K562 (cell line): ENCODE measurements at regions of chr3 and their contacts with region 1.

Region 1: DNA sequence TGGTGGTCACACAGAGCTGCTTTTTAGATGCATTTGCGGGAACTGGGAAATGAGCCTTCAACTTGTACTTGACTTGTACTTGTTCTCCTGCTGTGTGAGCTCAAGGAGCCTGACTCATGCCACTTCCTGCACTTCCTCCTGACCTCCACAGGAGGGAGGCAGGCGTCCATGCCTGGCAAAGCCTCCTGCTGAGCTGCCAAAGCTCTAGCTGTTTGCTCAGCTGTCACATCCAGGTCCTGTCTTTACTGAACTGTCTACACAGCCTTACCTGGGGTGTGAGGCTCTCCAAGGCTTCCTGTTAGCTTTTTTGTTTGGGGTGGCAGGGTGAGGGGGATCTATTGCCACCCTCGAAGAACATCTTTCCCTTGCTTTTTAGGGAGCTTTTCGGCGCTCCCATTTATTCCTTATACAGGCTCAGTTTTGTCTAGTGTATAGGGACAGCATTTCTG is 6.4 kb downstream of the THPO start:
- DNase-seq: peak; percentile 73 to 89 (median 78)
- ATAC-seq: peak; percentile 96
- H3K4me3 ChIP-seq: no peak overlapping the region
- H3K27ac ChIP-seq: no peak overlapping the region
- H3K4me1 ChIP-seq: no peaks in the 10 kb centered on the region
- H3K27me3 ChIP-seq: peaks cover 2 to 4% of the 10 kb centered on the region in 2 experiments; a peak in 3 of 5 replicates
- CTCF ChIP-seq: peak; percentile 95 to 98 (median 97)
- EP300 ChIP-seq: no peak
- POLR2A ChIP-seq: no peak
- RAD21 ChIP-seq: peak; percentile 85 to 97

Region 2: GRCh38 chr3:184261270-184261853 is 110.2 kb before region 1 on chr3 and contains the start of gene CAMK2N2:
- CTCF ChIA-PET with region 1: no interaction called
- POLR2A ChIA-PET with region 1: no interaction called
- in situ Hi-C with region 1: no loop called
- intact Hi-C with region 1: no loop called
- DNase-seq: peak; percentile 76 to 93 (median 88)
- ATAC-seq: peak; percentile 76
- H3K4me3 ChIP-seq: peak within 1 kb of the TSS; percentile 42
- H3K27ac ChIP-seq: no peak within 1 kb of the TSS
- H3K4me1 ChIP-seq: peaks cover 14 to 36% of the 10 kb centered on the region in 2 experiments; a peak in 4 of 5 replicates
- H3K27me3 ChIP-seq: peaks cover 10 to 31% of the 10 kb centered on the region in 2 experiments; a peak in 4 of 5 replicates
- CTCF ChIP-seq: no peak
- EP300 ChIP-seq: no peak
- POLR2A ChIP-seq: no peak
- RAD21 ChIP-seq: no peak
- polyA plus RNA-seq, gene CAMK2N2: not detected

Region 3: DNA sequence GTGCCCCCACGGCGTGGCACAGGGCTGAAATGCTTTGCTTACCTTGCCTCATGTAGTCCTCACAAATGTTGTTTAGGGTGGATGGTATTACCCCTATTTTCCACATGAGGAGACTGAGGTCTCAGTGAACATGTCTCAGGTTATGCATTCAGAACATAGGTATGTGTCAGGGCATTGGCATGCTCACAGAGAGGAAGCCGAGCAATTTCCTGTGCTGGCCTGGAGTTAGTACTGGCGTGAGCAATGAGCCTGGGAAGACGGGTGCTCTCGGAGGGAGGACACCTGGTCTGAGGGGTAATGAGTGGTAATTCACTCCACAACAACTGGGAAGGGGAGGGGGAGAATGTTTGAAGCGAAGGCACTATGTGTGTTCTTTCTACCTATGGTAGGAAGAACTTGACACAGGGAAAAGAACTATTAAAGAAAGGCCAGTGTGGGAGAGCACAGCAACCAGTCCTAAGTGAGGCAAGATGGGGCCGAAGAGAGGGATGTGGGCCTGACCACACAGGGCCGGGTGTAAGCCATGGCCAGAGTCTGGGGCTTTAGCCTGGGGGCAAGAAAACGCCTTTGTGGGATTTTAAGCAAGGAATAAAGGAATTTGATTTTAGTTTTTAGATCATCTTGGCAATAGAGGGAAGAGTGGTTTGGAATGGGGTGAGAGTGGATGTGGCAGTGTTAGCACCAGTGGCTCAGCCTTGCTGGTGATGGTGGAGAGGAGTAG is 39.1 kb before region 1 on chr3:
- CTCF ChIA-PET with region 1: no interaction called
- POLR2A ChIA-PET with region 1: no interaction called
- in situ Hi-C with region 1: no loop called
- intact Hi-C with region 1: no loop called
- DNase-seq: no peak
- ATAC-seq: no peak
- H3K4me3 ChIP-seq: no peak overlapping the region
- H3K27ac ChIP-seq: peak overlapping the region; percentile 83; the same call in 2 of the 3 replicates
- H3K4me1 ChIP-seq: peaks cover 50% of the 10 kb centered on the region in 2 experiments
- H3K27me3 ChIP-seq: no peaks in the 10 kb centered on the region
- CTCF ChIP-seq: no peak
- EP300 ChIP-seq: no peak
- POLR2A ChIP-seq: peak; percentile 47; the same call in 1 of the 2 replicates
- RAD21 ChIP-seq: no peak

Region 4: GRCh38 chr3:184417619-184418327 is 46.2 kb after region 1 on chr3:
- CTCF ChIA-PET with region 1: no interaction called
- POLR2A ChIA-PET with region 1: interaction called, 5 read pairs
- in situ Hi-C with region 1: loop called (anchors 5 kb)
- intact Hi-C with region 1: loop called (anchors 2 kb)
- DNase-seq: peak; percentile 70 to 83 (median 78)
- ATAC-seq: peak; percentile 98
- H3K4me3 ChIP-seq: no peak overlapping the region
- H3K27ac ChIP-seq: no peak overlapping the region
- H3K4me1 ChIP-seq: no peaks in the 10 kb centered on the region
- H3K27me3 ChIP-seq: peaks cover 0 to 34% of the 10 kb centered on the region in 2 experiments; a peak in 3 of 5 replicates
- CTCF ChIP-seq: peak; percentile 88 to 92 (median 89)
- EP300 ChIP-seq: no peak
- POLR2A ChIP-seq: no peak
- RAD21 ChIP-seq: peak; percentile 62 to 89

Region 5: GRCh38 chr3:184469423-184469822 is 97.8 kb after region 1 on chr3:
- CTCF ChIA-PET with region 1: interaction called, 7 read pairs
- POLR2A ChIA-PET with region 1: interaction called, 4 read pairs
- in situ Hi-C with region 1: loop called (anchors 5 kb)
- intact Hi-C with region 1: loop called (anchors 1 kb)
- DNase-seq: peak; percentile 48 to 59 (median 52)
- ATAC-seq: peak; percentile 84
- H3K4me3 ChIP-seq: no peak overlapping the region
- H3K27ac ChIP-seq: no peak overlapping the region
- H3K4me1 ChIP-seq: no peaks in the 10 kb centered on the region; a peak in 1 of 5 replicates
- H3K27me3 ChIP-seq: peaks cover 11 to 47% of the 10 kb centered on the region in 2 experiments; a peak in 4 of 5 replicates
- CTCF ChIP-seq: peak; percentile 76 to 80 (median 77)
- EP300 ChIP-seq: no peak
- POLR2A ChIP-seq: no peak
- RAD21 ChIP-seq: peak; percentile 42 to 78

Region 6: DNA sequence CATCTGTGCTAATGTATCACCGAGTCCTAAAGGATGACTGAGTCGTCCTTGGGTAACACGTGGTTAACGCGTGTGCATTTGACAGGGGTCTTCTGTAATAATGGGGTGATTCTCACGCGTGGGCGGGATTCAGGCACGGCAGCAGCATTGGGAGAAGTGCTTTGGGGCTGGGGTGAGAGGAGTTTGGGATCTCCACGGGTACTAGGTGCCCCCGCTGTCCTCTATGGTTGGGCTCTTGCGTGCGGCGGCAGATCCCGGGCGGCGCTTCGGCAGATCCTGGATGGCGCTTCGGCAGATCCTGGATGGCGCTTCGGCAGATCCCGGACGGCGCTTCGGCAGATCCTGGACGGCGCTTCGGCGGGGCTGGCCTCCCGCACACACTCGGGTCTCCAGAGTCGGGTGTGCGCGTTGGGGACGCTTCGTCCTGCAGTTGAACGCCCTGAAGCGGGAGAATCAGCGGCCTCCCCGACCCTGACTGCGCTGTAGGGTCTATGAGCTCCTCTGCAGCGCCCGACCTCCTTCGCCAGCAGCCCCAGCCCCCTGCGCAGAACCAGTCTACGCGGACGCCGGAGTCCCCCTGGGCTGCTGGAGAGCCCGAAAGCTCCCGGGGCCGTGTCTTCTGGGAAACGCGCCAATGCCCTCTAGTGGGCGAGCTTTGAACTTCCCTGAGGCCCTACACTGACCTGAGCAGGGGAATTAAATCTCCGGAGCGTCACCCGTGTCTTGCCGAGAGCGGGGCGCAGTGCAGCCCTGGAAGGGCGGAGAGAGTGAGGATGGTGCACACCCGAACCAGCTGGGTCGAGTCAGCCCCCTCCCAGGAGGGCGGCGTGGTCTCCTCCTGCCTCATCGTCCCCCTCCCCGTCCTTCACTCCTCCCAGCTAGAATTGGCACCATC is 141.9 kb after region 1 on chr3:
- CTCF ChIA-PET with region 1: interaction called, 3 read pairs
- POLR2A ChIA-PET with region 1: interaction called, 4 read pairs
- in situ Hi-C with region 1: no loop called
- intact Hi-C with region 1: loop called (anchors 1 kb)
- DNase-seq: peak; percentile 78 to 87 (median 84)
- ATAC-seq: peak; percentile 100
- H3K4me3 ChIP-seq: no peak overlapping the region
- H3K27ac ChIP-seq: no peak overlapping the region
- H3K4me1 ChIP-seq: peaks cover 0 to 10% of the 10 kb centered on the region in 2 experiments; a peak in 2 of 5 replicates
- H3K27me3 ChIP-seq: peaks cover 10 to 35% of the 10 kb centered on the region in 2 experiments; a peak in 3 of 5 replicates
- CTCF ChIP-seq: peak; percentile 79 to 83 (median 82)
- EP300 ChIP-seq: no peak
- POLR2A ChIP-seq: no peak
- RAD21 ChIP-seq: peak; percentile 47 to 76

Region 7: DNA sequence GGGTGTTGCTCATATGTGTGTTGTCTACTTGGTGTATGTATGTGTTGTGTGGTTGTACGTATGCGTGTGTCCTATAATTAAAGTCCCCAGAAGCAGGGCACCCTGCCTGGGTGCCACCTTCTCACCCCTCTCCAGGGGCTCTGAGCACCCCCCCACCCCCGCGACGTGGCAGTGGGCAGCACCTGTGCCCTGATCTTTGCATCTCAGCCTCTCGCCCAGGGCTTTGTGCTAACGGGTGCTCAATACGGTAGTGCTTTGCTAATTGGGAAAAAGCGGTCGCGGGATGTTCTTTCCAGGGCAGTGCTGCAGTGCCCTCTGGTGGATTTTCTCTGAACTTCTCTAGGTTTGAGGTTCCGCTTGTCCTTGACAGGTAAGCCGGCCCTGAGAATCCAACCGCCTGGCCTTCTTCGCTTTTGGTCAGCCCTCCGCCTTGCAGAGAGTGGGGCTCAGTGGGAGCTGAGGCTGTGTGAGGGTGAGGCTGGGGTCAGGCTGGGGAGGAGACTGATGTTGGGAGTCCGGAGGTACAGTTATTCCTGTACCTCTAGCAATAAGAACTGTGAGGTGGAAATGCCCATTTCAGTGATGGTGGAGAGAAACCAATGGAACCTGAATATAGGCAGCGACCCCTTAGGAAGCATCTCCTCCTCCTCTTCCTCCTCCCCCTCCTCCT is 172.4 kb after region 1 on chr3:
- CTCF ChIA-PET with region 1: interaction called, 26 read pairs
- POLR2A ChIA-PET with region 1: interaction called, 4 read pairs
- in situ Hi-C with region 1: no loop called
- intact Hi-C with region 1: loop called (anchors 1 kb)
- DNase-seq: peak; percentile 66 to 82 (median 73)
- ATAC-seq: peak; percentile 84
- H3K4me3 ChIP-seq: no peak overlapping the region
- H3K27ac ChIP-seq: no peak overlapping the region
- H3K4me1 ChIP-seq: peaks cover 0 to 4% of the 10 kb centered on the region in 2 experiments; a peak in 1 of 5 replicates
- H3K27me3 ChIP-seq: peaks cover 16 to 50% of the 10 kb centered on the region in 2 experiments; a peak in 3 of 5 replicates
- CTCF ChIP-seq: peak; percentile 83 to 91 (median 85)
- EP300 ChIP-seq: no peak
- POLR2A ChIP-seq: no peak
- RAD21 ChIP-seq: peak; percentile 74 to 82

Region 8: DNA sequence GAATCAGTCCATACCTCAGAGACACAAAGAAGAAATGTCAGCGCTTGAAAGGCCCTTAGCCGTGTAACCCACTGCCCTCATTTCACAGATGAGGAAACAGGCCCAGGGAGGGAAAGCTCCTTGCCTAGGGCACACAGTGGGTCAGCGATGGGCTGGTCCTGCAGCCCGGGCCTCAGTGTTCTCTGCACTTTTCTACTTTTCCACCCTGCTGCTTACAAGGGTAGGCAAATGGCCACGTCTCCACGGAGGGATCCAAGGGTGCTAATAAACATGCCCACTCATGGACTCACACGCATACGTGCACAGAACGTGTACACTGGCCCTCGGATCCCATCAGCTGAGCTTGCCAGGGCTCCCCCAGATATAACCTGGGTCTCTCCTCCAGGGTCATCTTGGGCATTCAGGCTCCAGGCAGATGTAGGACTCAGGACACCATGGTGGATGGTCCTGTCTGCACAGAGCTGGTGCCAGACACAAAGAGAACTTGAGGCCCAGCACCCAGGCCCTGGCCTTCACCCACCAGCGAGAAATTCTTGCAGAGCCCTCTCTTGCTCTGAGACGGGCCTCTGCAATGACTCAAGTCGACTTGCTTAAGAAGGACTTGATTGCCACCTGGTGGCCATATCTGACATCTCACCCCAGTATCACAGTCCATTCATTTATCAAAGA is 405.9 kb after region 1 on chr3:
- CTCF ChIA-PET with region 1: no interaction called
- POLR2A ChIA-PET with region 1: no interaction called
- in situ Hi-C with region 1: no loop called
- intact Hi-C with region 1: loop called (anchors 10 kb)
- DNase-seq: peak; percentile 81 to 90 (median 82)
- ATAC-seq: peak; percentile 97
- H3K4me3 ChIP-seq: no peak overlapping the region
- H3K27ac ChIP-seq: no peak overlapping the region
- H3K4me1 ChIP-seq: peaks cover 0 to 9% of the 10 kb centered on the region in 2 experiments; a peak in 1 of 5 replicates
- H3K27me3 ChIP-seq: peaks cover 35 to 66% of the 10 kb centered on the region in 2 experiments
- CTCF ChIP-seq: peak; percentile 78 to 93 (median 89)
- EP300 ChIP-seq: no peak
- POLR2A ChIP-seq: no peak
- RAD21 ChIP-seq: peak; percentile 91 to 99